Ascending aorta (tissue), 2 donors: ENCODE measurements at regions of chr11 and their contacts with region 1.

Region 1: DNA sequence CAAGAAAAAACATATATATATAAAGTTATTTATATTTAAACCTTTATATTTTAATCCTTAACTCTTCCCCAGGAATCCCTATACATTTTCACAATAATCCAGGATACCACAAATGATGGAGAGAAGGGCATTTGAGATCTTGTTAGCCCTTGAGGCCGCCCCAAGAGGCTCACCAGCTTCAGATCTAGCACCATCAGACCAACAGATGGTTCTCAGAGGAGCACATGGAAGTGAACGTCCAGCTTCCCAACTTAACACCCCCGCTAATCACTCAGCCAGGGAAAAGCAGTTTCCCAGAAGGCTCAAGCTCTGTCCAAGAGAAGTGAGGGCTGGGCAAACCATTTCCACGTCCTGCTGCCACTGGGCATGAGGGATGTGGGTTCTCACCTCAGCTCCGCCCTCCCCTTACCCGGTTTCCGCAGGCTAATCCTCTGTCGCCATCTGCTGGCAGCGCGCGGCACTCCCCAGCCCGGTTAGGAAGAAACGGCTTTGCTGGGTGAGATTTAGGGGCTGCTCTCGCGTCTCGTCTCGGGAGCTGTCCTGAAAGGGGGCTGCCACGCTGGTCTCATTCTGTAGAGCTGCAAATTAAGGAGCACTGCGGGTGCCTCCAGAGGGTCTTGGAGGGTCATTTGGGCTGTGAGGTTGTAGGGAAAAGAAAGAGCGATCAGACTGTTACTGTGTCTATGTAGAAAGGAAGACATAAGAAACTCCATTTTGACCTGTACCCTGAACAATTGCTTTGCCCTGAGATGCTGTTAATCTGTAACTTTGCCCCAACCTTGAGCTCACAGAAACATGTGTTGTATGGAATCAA is 6.8 kb upstream of the FAM111A start:
- DNase-seq: peak; percentile 21 to 91
- H3K4me3 ChIP-seq: peak overlapping the region in 1 of 2 donors; percentile 26
- H3K27ac ChIP-seq: no peak overlapping the region
- H3K4me1 ChIP-seq: no peaks in the 10 kb centered on the region
- H3K27me3 ChIP-seq: no peaks in the 10 kb centered on the region
- CTCF ChIP-seq: peak; percentile 80 to 98 (median 96)

Region 2: DNA sequence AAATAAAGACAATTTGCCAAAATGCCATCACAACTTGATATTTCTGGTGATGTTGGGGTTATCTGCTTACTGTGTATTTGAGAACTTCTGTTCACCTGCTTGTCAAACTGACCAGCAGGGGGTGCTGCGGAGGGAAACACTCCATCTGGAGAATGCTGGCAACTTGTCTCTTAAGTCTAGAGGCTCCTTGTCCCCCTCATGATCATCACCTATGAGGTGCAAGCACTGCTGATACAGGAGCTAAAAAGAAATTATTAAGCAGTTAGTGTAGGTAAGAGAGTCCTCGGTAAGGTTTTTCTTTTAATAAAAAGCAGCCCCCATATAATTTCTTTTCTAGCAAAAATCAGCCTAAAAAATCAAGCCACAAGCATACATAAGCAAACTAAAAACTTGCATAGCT is 82.5 kb before region 1 on chr11:
- intact Hi-C with region 1: loop called (anchors 2 kb)
- DNase-seq: peak in 1 of 2 donors; percentile 80
- H3K4me3 ChIP-seq: no peak overlapping the region
- H3K27ac ChIP-seq: no peak overlapping the region
- H3K4me1 ChIP-seq: no peaks in the 10 kb centered on the region
- H3K27me3 ChIP-seq: no peaks in the 10 kb centered on the region
- CTCF ChIP-seq: peak; percentile 18 to 64 (median 43)

Region 3: GRCh38 chr11:59097113-59097708 is 38.6 kb before region 1 on chr11:
- intact Hi-C with region 1: loop called (anchors 1 kb)
- DNase-seq: peak in 1 of 2 donors; percentile 74
- H3K4me3 ChIP-seq: no peak overlapping the region
- H3K27ac ChIP-seq: no peak overlapping the region
- H3K4me1 ChIP-seq: peaks cover 0 to under 1% of the 10 kb centered on the region in 2 donors
- H3K27me3 ChIP-seq: no peaks in the 10 kb centered on the region
- CTCF ChIP-seq: peak; percentile 33 to 58 (median 44)

Region 4: GRCh38 chr11:59523541-59523940 is 387.7 kb after region 1 on chr11:
- intact Hi-C with region 1: no loop called
- DNase-seq: no peak
- H3K4me3 ChIP-seq: no peak overlapping the region
- H3K27ac ChIP-seq: no peak overlapping the region
- H3K4me1 ChIP-seq: no peaks in the 10 kb centered on the region
- H3K27me3 ChIP-seq: no peaks in the 10 kb centered on the region
- CTCF ChIP-seq: no peak